CD8-positive, alpha-beta memory T cell (primary cell): ENCODE measurements at regions of chr18 and their contacts with region 1.

Region 1: GRCh38 chr18:12890506-12890905 is 6.5 kb upstream of the PTPN2 start:
- DNase-seq: no peak
- H3K4me3 ChIP-seq: no peak overlapping the region
- H3K4me3 Mint-ChIP-seq: no peak overlapping the region
- H3K27ac ChIP-seq: no peak overlapping the region
- H3K27ac Mint-ChIP-seq: no peak overlapping the region
- H3K4me1 ChIP-seq: peaks cover under 1% of the 10 kb centered on the region
- H3K4me1 Mint-ChIP-seq: peaks cover 5 to 24% (median 17%) of the 10 kb centered on the region in 3 donors
- H3K27me3 ChIP-seq: no peaks in the 10 kb centered on the region
- H3K27me3 Mint-ChIP-seq: peaks cover 10 to 13% of the 10 kb centered on the region in 2 donors

Region 2: DNA sequence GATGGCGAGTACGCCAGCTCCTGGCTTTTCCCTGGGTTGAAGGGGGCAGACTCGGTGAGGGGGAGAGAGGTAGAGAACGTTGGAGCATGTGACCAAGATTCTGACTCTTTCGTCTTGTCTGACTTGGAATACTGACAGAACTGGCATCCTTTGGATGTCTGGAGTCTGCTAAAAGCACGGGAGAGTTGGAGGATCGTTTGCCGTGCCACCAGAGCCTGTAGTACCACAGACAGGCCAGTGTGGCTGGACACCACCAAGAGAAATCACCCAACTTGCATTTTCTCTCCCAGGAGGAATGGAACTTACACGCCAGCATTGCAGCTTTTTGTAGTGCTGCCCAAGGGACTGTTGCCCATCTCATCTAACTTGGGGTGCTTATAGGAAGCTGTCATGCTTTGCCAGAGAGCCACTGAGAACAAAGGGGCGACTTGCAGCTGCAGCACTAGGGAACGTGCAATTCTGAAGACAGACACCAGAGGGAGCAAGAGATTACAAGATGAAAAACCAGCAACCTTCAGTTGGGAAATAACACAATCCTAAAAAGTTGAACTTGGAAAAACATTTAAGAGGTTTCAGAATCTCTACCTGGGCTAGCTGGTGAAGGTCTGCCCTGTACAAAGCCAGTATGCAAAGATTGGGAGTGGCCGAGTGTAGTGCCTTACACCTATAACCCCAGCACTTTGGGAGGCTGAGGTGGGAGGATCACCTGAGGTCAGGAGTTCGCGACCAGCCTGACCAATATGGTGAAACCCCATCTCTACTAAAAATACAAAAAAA is 163.5 kb before region 1 on chr18:
- CTCF ChIA-PET with region 1: interaction called, 35 read pairs
- POLR2A ChIA-PET with region 1: no interaction called
- DNase-seq: peak; percentile 45 to 62 (median 55)
- H3K4me3 ChIP-seq: no peak overlapping the region
- H3K4me3 Mint-ChIP-seq: no peak overlapping the region
- H3K27ac ChIP-seq: no peak overlapping the region
- H3K27ac Mint-ChIP-seq: peak overlapping the region in 5 of 8 donors; percentile 10 to 72 (median 23)
- H3K4me1 ChIP-seq: no peaks in the 10 kb centered on the region
- H3K4me1 Mint-ChIP-seq: peaks cover 0 to 2% (median under 1%) of the 10 kb centered on the region in 3 donors
- H3K27me3 ChIP-seq: no peaks in the 10 kb centered on the region
- H3K27me3 Mint-ChIP-seq: no peaks in the 10 kb centered on the region

Region 3: DNA sequence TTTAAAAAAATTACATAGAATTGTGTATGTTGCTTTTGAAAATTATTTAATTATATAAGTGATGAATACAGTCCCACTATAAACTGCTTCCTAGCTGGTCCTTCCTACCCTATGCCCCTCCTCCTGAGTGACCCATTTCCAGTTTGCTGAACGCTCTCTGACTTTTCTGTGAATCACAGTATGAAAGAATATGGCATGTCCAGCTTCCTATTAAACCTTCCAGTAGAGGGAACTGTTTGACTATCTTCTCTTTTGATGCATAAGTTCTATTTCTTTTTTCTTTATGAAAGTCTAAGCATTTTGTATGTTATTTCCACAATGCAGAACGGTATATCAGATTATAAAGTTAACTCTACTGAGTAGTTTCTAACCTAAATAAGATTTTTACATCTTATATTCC is 146.4 kb before region 1 on chr18:
- CTCF ChIA-PET with region 1: interaction called, 19 read pairs
- POLR2A ChIA-PET with region 1: interaction called, 5 read pairs
- DNase-seq: peak in 2 of 5 donors; percentile 12 to 34
- H3K4me3 ChIP-seq: no peak overlapping the region
- H3K4me3 Mint-ChIP-seq: no peak overlapping the region
- H3K27ac ChIP-seq: no peak overlapping the region
- H3K27ac Mint-ChIP-seq: no peak overlapping the region
- H3K4me1 ChIP-seq: no peaks in the 10 kb centered on the region
- H3K4me1 Mint-ChIP-seq: no peaks in the 10 kb centered on the region
- H3K27me3 ChIP-seq: no peaks in the 10 kb centered on the region
- H3K27me3 Mint-ChIP-seq: peaks cover 0 to under 1% of the 10 kb centered on the region in 2 donors

Region 4: DNA sequence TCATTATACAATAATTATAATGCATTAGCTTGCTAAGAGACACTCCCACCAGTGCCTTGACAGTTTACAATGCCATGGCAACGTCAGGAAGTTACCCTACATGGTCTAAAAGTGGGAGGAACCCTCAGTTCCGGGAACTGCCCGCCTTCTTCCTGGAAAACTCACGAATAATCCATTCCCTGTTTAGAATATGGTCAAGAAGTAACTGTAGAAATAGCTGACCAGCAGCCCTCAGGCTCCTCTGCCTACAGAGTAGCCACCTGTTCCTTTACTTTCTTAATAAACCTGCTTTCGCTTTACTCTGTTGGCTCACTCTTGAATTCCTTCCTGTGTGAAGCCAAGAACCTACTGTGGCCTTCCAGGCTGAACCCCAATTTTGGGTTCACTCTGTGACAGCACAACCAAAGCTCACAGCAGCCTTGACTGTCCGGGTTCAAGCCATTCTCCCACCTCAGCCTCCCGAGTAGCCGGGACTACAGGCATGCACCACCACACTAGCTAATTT is 13.6 kb after region 1 on chr18:
- CTCF ChIA-PET with region 1: interaction called, 21 read pairs
- POLR2A ChIA-PET with region 1: no interaction called
- DNase-seq: peak in 1 of 5 donors; percentile 33
- H3K4me3 ChIP-seq: peak overlapping the region; percentile 30
- H3K4me3 Mint-ChIP-seq: peak overlapping the region; percentile 60 to 88 (median 84)
- H3K27ac ChIP-seq: peak overlapping the region; percentile 53
- H3K27ac Mint-ChIP-seq: peak overlapping the region; percentile 71 to 97 (median 94)
- H3K4me1 ChIP-seq: peaks cover 14% of the 10 kb centered on the region
- H3K4me1 Mint-ChIP-seq: peaks cover 10 to 13% (median 13%) of the 10 kb centered on the region in 3 donors
- H3K27me3 ChIP-seq: no peaks in the 10 kb centered on the region
- H3K27me3 Mint-ChIP-seq: peaks cover 0 to 5% of the 10 kb centered on the region in 2 donors

Region 5: DNA sequence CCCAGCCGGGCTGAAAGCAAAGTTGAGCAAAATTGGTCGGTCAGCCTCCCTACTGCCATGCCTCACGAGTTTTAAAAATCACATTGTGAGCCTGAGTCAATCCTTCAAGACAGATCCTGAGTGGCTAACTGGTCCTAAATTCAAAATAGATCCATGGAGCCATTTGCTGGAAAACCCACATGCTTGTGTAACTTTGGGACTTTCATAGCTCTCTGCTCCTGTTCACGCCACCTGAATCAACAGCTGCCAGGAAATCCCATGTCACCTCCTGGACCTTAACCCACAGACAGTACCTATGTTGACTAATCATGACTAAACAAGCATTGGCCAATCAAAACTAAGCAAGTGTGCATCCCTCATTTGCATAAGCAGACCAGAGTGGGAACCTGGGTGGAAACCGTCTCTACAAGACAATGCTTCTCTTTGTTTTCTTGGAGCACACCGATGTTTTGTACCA is 285.3 kb after region 1 on chr18:
- CTCF ChIA-PET with region 1: no interaction called
- POLR2A ChIA-PET with region 1: no interaction called
- DNase-seq: no peak
- H3K4me3 ChIP-seq: no peak overlapping the region
- H3K4me3 Mint-ChIP-seq: no peak overlapping the region
- H3K27ac ChIP-seq: no peak overlapping the region
- H3K27ac Mint-ChIP-seq: peak overlapping the region in 1 of 8 donors; percentile 41
- H3K4me1 ChIP-seq: no peaks in the 10 kb centered on the region
- H3K4me1 Mint-ChIP-seq: peaks cover 10 to 20% (median 20%) of the 10 kb centered on the region in 3 donors
- H3K27me3 ChIP-seq: no peaks in the 10 kb centered on the region
- H3K27me3 Mint-ChIP-seq: peaks cover under 1 to 7% of the 10 kb centered on the region in 2 donors